Mammary epithelial cell (primary cell): ENCODE measurements at regions of chr5 and their contacts with region 1.

Region 1: DNA sequence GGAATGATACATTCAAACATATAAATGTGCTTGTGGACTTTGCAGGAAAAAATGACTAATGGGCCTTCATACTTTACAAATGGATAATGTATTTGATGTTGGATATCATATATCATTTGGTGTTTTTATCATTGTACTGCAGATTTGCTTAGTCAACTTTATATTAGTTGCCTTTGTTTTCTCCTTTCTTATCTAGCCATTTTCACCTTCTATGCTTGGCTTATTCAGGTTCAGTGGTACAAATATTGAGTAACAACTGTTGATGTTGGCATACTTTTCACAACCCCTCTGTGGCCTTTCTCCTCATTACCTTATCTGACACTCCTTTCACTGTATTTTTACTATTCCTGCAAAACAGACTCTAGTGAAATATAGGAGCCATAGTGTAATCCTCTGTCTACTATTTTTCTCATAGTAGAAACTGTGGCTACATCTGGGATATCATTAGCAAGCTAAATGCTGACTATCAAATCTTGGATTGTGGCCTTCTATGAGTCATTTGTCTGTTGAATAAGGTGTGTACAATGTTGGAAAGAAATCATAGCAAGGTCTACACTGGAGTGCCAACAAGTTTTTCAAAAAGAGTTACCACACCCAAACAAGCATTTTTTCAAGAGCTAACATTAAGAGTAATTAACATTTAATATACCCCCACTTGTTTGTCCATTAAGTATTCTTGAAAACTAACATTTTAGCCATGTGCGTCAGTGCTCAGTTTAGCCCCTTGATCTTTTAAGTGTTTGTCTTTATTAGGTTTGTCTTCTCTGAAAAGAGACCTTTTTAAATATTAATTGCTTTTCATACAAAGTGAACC is 330.1 kb downstream of the ADGRV1 start:
- DNase-seq: peak; percentile 65
- H3K4me3 ChIP-seq: no peak overlapping the region
- H3K27ac ChIP-seq: no peak overlapping the region
- H3K4me1 ChIP-seq: no peaks in the 10 kb centered on the region
- H3K27me3 ChIP-seq: no peaks in the 10 kb centered on the region
- CTCF ChIP-seq: no peak

Region 2: GRCh38 chr5:91235271-91235694 is 346.6 kb after region 1 on chr5:
- CTCF ChIA-PET with region 1: no interaction called
- dilution Hi-C with region 1: no loop called
- in situ Hi-C with region 1: no loop called
- intact Hi-C with region 1: no loop called
- DNase-seq: no peak
- H3K4me3 ChIP-seq: no peak overlapping the region
- H3K27ac ChIP-seq: no peak overlapping the region
- H3K4me1 ChIP-seq: no peaks in the 10 kb centered on the region
- H3K27me3 ChIP-seq: no peaks in the 10 kb centered on the region
- CTCF ChIP-seq: no peak

Region 3: GRCh38 chr5:91403438-91403837 is 514.7 kb after region 1 on chr5:
- CTCF ChIA-PET with region 1: no interaction called
- dilution Hi-C with region 1: loop called (anchors 10 kb)
- in situ Hi-C with region 1: no loop called
- intact Hi-C with region 1: no loop called
- DNase-seq: no peak
- H3K4me3 ChIP-seq: no peak overlapping the region
- H3K27ac ChIP-seq: no peak overlapping the region
- H3K4me1 ChIP-seq: no peaks in the 10 kb centered on the region
- H3K27me3 ChIP-seq: no peaks in the 10 kb centered on the region
- CTCF ChIP-seq: no peak